B cell (primary cell): ENCODE measurements at regions of chr4 and their contacts with region 1.

Region 1: DNA sequence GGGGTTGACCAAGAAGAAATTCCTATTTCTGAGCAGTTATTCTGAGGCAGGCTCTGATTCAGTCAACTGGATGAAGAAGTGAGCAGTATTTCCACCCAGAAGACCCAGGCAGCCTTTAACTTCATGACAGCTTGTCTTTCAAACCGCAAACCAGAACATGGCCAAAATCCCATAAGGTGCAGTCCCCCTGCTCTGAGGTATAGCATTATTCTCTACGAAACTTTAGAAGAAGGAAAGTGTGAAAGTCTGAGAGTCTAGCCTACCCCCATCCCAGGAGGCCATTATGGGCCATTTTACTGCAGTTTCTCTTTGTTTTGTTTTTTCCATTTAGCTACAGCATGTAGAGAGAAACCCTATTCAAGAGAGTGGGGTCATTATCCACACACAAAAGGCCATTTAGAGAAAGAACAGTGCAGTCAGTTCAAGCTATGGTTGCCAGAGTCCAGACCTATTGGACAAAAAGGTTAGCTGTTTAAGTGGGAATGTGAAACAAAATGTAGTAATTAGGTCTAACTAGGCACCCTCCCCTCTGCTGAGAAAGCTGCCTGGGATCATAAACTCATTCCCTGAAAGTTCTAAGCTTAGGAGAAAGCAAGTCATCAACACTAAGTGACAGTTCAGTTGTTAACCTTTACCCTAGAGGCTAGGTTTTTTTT is 52.1 kb upstream of the RASGEF1B start:
- DNase-seq: no peak
- ATAC-seq: no peak
- H3K4me3 ChIP-seq: no peak overlapping the region
- H3K4me3 Mint-ChIP-seq: no peak overlapping the region
- H3K27ac ChIP-seq: no peak overlapping the region
- H3K27ac Mint-ChIP-seq: no peak overlapping the region
- H3K4me1 ChIP-seq: peaks cover 6 to 17% of the 10 kb centered on the region in 2 donors
- H3K4me1 Mint-ChIP-seq: peaks cover 35% of the 10 kb centered on the region
- H3K27me3 ChIP-seq: no peaks in the 10 kb centered on the region
- H3K27me3 Mint-ChIP-seq: no peaks in the 10 kb centered on the region
- CTCF ChIP-seq: no peak

Region 2: DNA sequence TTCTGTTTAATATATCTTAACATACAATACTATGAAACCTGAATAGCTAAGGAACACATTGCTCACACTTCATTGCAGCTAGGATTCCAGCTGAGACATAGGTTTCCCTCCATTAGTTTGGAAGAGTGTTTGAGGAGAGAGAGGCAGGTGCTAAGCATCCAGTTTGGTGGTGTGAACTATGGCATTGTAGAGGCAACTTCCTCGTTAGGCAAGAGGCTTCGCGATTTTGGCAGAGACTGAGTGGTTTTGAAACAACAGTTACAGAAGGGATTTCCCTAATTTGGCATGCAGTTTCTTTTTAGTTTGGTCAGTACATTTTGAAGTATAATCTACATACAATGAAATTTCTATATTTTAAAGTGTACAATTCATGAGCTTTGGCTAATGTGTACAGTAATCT is 610.4 kb before region 1 on chr4:
- CTCF ChIA-PET with region 1: no interaction called
- POLR2A ChIA-PET with region 1: no interaction called
- intact Hi-C with region 1: no loop called
- DNase-seq: peak; percentile 43
- ATAC-seq: peak; percentile 43
- H3K4me3 ChIP-seq: no peak overlapping the region
- H3K4me3 Mint-ChIP-seq: no peak overlapping the region
- H3K27ac ChIP-seq: no peak overlapping the region
- H3K27ac Mint-ChIP-seq: no peak overlapping the region
- H3K4me1 ChIP-seq: peaks cover 7 to 8% of the 10 kb centered on the region in 2 donors
- H3K4me1 Mint-ChIP-seq: peaks cover 14% of the 10 kb centered on the region
- H3K27me3 ChIP-seq: no peaks in the 10 kb centered on the region
- H3K27me3 Mint-ChIP-seq: no peaks in the 10 kb centered on the region
- CTCF ChIP-seq: no peak

Region 3: DNA sequence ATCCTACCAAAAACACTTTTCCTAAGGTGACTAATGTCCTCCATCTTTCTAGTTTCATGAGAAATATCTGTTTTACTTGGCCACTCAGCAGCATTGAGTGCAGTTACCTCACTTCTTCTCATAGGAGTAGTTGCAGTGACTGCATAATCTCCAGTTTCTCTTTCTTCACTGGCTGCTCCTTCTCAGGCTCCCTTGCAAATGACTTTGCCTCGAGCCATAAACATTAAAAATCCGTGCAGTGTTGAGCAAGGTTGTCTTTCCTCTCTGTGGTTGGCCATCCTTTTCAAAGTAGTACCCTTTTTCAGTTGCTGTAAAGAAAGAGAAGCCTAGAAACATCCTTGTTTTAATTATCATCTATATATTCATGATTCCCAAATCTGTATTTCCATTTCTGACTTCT is 298.5 kb before region 1 on chr4:
- CTCF ChIA-PET with region 1: no interaction called
- POLR2A ChIA-PET with region 1: no interaction called
- intact Hi-C with region 1: no loop called
- DNase-seq: no peak
- ATAC-seq: no peak
- H3K4me3 ChIP-seq: no peak overlapping the region
- H3K4me3 Mint-ChIP-seq: no peak overlapping the region
- H3K27ac ChIP-seq: no peak overlapping the region
- H3K27ac Mint-ChIP-seq: no peak overlapping the region
- H3K4me1 ChIP-seq: no peaks in the 10 kb centered on the region
- H3K4me1 Mint-ChIP-seq: no peaks in the 10 kb centered on the region
- H3K27me3 ChIP-seq: peaks cover 0 to 6% (median 3%) of the 10 kb centered on the region in 4 experiments
- H3K27me3 Mint-ChIP-seq: peaks cover 14% of the 10 kb centered on the region
- CTCF ChIP-seq: no peak

Region 4: DNA sequence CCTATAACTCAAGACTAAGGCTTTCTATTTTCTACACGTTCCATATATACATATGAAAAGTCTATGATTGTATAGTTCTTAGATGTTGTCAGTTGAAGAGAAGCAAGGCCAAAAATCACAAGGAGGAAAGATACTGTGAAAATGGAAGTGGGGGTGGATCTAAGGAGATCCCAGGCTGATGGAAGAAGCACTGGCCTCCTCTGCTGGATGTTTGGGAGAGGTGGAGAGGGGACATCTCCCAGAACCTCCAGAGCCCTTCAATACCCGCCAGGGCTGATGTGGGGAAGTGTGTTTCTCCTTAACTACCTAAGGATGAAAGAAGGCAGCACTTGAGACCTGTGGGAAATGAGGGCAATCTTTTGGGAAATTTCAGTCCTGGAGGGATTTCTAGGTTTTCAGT is 119.5 kb before region 1 on chr4:
- CTCF ChIA-PET with region 1: no interaction called
- POLR2A ChIA-PET with region 1: no interaction called
- intact Hi-C with region 1: no loop called
- DNase-seq: no peak
- ATAC-seq: no peak
- H3K4me3 ChIP-seq: no peak overlapping the region
- H3K4me3 Mint-ChIP-seq: no peak overlapping the region
- H3K27ac ChIP-seq: no peak overlapping the region
- H3K27ac Mint-ChIP-seq: no peak overlapping the region
- H3K4me1 ChIP-seq: no peaks in the 10 kb centered on the region
- H3K4me1 Mint-ChIP-seq: peaks cover 3% of the 10 kb centered on the region
- H3K27me3 ChIP-seq: no peaks in the 10 kb centered on the region
- H3K27me3 Mint-ChIP-seq: no peaks in the 10 kb centered on the region
- CTCF ChIP-seq: no peak

Region 5: GRCh38 chr4:81505004-81505598 is 18.7 kb before region 1 on chr4:
- CTCF ChIA-PET with region 1: no interaction called
- POLR2A ChIA-PET with region 1: no interaction called
- intact Hi-C with region 1: loop called (anchors 2 kb)
- DNase-seq: peak; percentile 85
- ATAC-seq: peak; percentile 69
- H3K4me3 ChIP-seq: peak overlapping the region in 3 of 5 experiments; percentile 6 to 33 (median 28)
- H3K4me3 Mint-ChIP-seq: peak overlapping the region; percentile 81
- H3K27ac ChIP-seq: peak overlapping the region; percentile 56 to 81
- H3K27ac Mint-ChIP-seq: peak overlapping the region; percentile 88
- H3K4me1 ChIP-seq: peaks cover 45 to 58% of the 10 kb centered on the region in 2 donors
- H3K4me1 Mint-ChIP-seq: peaks cover 70% of the 10 kb centered on the region
- H3K27me3 ChIP-seq: no peaks in the 10 kb centered on the region
- H3K27me3 Mint-ChIP-seq: no peaks in the 10 kb centered on the region
- CTCF ChIP-seq: no peak

Region 6: DNA sequence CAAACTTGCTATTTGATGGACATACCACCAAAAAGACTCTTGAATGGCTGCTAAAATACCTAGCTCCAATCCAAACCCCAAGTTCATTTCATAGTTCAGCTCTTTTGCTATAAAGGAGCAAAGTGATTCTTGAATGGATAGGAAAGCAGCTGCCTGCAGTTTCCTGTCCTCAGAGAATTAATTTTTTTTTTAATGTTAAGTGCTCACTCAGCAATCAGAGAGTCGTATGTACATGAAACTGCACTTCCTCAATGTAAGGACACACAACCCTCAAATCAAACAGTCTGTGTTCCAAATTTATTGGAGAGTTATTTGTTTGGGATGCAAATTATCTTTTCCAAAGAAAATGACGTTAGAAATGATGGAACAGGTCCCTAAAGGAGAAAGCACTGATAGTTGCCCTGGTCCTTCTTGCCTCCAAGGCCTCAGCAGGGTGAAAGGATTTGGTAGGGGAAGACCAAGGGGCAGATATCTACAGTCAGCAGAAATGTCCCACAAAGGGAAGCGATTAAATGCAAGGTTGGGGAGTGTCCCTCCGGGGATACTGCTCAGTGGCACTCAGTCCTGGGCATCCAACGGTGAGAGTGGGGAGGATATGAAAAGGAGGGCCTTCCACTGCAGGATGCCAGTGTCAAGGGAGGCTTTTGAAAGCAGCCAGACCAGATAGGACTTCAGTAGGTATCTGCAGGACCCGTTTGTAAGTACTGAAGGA is 15.1 kb after region 1 on chr4:
- CTCF ChIA-PET with region 1: no interaction called
- POLR2A ChIA-PET with region 1: no interaction called
- intact Hi-C with region 1: loop called (anchors 2 kb)
- DNase-seq: peak; percentile 15
- ATAC-seq: no peak
- H3K4me3 ChIP-seq: no peak overlapping the region
- H3K4me3 Mint-ChIP-seq: no peak overlapping the region
- H3K27ac ChIP-seq: peak overlapping the region in 1 of 2 donors; percentile 4
- H3K27ac Mint-ChIP-seq: no peak overlapping the region
- H3K4me1 ChIP-seq: peaks cover 8 to 9% of the 10 kb centered on the region in 2 donors
- H3K4me1 Mint-ChIP-seq: peaks cover 9% of the 10 kb centered on the region
- H3K27me3 ChIP-seq: no peaks in the 10 kb centered on the region
- H3K27me3 Mint-ChIP-seq: no peaks in the 10 kb centered on the region
- CTCF ChIP-seq: no peak

Region 7: DNA sequence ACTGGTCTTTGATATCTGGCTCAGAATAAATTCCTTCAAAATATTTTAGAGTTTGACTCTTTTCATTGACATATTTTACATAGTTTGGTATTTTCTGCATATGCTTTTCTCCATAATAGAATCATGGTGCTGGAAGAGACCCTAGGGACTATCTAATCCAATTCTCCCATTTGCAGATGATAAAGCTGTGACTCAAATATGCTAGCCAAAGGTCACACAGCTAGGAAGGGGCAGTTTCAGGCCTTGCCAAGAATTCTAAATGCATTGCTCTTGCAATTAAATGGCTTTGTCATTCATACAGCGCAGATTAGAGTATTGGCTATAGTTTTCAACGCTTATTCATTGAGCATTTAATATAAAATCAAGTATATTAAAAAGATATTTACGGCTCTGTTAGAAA is 322.0 kb after region 1 on chr4:
- CTCF ChIA-PET with region 1: no interaction called
- POLR2A ChIA-PET with region 1: no interaction called
- intact Hi-C with region 1: no loop called
- DNase-seq: no peak
- ATAC-seq: no peak
- H3K4me3 ChIP-seq: no peak overlapping the region
- H3K4me3 Mint-ChIP-seq: no peak overlapping the region
- H3K27ac ChIP-seq: no peak overlapping the region
- H3K27ac Mint-ChIP-seq: no peak overlapping the region
- H3K4me1 ChIP-seq: no peaks in the 10 kb centered on the region
- H3K4me1 Mint-ChIP-seq: peaks cover 2% of the 10 kb centered on the region
- H3K27me3 ChIP-seq: no peaks in the 10 kb centered on the region
- H3K27me3 Mint-ChIP-seq: peaks cover 2% of the 10 kb centered on the region
- CTCF ChIP-seq: no peak